ENCODE measurements at regions of chr7 and their contacts with region 1.

Region 1: DNA sequence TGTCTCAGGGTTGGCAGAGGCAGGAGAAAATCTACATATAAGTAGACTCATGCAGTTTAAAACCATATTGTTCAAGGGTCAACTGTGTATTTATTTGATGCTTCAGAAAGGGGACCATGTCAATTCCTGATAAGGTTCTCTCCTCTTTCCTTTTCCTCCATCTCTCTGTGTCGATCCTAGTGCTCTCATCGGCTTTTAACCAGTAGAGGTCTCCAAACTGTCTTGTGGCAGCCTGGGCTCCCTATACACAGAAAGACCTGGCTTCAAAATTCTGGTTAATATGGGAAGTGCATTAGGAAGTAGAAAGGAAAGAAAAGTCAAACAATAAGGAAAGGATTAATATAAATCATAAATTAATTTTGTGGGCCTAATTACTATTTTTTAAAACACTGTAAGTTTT is 304.4 kb upstream of the C7orf33 start:
- DNase-seq: peak; percentile 12
- H3K4me3 ChIP-seq: no peak overlapping the region
- H3K27ac ChIP-seq: no peak overlapping the region
- H3K4me1 ChIP-seq: no peaks in the 10 kb centered on the region
- H3K27me3 ChIP-seq: peaks cover 1% of the 10 kb centered on the region
- CTCF ChIP-seq: peak; percentile 50 to 75

Region 2: DNA sequence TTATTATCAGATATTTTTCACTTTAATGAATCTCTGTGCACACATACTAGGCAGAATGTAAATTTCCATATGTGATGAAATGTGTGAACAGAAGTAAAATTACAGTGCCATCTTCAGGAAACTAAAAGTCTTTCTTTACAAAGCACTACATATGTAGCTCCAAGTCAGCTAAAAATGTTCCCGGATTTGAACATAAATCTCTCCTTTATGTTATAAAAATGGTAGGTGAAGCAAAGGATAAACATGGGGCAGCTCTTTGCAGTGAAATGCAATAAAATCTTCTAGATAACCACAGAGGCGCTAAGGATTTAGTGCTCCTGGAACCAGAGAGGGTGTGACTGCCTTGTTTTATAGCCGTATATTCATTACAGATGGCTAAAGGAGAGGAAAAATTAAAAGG is 199.5 kb after region 1 on chr7:
- CTCF ChIA-PET with region 1: interaction called, 6 read pairs
- dilution Hi-C with region 1: no loop called
- in situ Hi-C with region 1: no loop called
- intact Hi-C with region 1: loop called (anchors 1 kb)
- DNase-seq: no peak
- H3K4me3 ChIP-seq: no peak overlapping the region
- H3K27ac ChIP-seq: no peak overlapping the region
- H3K4me1 ChIP-seq: peaks cover 12% of the 10 kb centered on the region
- H3K27me3 ChIP-seq: no peaks in the 10 kb centered on the region
- CTCF ChIP-seq: peak in 1 of 2 donors; percentile 39